Common myeloid progenitor, CD34-positive (primary cell): ENCODE measurements at regions of chr1 and their contacts with region 1.

Region 1: GRCh38 chr1:63316984-63317816 is 5.2 kb upstream of the FOXD3 start:
- DNase-seq: peak; percentile 75 to 80 (median 77)
- H3K4me3 ChIP-seq: peak overlapping the region; percentile 1 to 64 (median 54)
- H3K27ac ChIP-seq: no peak overlapping the region
- H3K4me1 ChIP-seq: peaks cover 3 to 25% (median 23%) of the 10 kb centered on the region in 4 experiments
- H3K27me3 ChIP-seq: peaks cover 18 to 83% (median 53%) of the 10 kb centered on the region in 5 experiments

Region 2: DNA sequence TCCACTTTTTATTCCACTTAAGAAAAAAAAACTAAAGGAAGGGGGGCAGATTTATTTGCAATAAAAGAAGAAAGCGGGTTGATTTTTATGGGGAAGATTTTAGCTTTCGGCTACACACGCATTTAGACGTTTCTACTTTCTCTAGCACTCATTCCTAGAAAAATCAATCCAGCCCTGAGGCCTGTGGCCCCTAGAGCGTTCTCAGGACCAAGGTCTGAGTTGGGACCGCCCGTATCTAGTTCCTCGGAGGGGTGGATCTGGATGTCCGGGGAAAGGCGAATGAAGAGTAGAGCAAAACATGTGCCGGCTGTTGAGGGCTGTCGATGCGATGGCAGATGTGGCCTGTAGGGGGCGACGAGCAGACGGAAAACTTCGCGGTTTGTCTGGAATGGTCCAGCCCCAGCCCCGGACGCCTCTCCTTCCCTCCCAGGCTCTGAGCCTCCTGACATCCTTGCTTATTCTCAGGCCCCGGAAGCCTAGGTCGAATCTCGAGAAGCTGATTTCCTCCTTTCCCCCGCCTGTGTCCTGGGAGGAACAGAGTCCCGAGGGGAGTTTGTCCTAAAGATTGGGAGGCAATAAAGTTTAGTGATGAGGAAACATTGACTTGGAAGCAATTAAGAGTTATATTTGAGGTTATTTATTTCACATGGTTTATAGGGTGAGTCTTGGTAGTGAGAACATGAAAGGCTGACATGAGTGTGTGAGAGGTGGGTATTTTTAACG is 10.4 kb after region 1 on chr1:
- CTCF ChIA-PET with region 1: interaction called, 38 read pairs
- POLR2A ChIA-PET with region 1: no interaction called
- DNase-seq: peak; percentile 66 to 75 (median 71)
- H3K4me3 ChIP-seq: no peak overlapping the region
- H3K27ac ChIP-seq: no peak overlapping the region
- H3K4me1 ChIP-seq: peaks cover 0 to 38% (median 36%) of the 10 kb centered on the region in 4 experiments
- H3K27me3 ChIP-seq: peaks cover 30 to 99% (median 56%) of the 10 kb centered on the region in 5 experiments

Region 3: DNA sequence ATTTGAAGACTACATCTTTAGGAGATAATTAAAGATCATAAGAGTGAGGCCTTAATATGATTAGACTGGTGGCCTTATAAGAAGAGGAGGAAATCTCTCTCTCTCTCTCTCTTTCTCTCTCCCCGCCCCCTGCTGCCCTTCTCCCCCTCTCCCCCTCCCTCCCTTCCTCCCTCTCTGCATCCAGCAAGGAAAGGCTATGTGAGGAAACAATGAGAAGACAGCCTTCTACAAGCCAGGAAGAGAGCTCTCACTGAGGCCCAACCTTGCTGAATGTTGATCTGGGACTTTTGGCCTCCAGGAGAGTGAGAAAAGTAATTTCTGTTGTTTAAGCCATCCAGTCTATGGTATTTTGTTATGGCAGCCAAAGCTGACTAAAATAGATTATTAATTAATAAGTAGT is 26.7 kb after region 1 on chr1:
- CTCF ChIA-PET with region 1: no interaction called
- POLR2A ChIA-PET with region 1: no interaction called
- DNase-seq: no peak
- H3K4me3 ChIP-seq: no peak overlapping the region
- H3K27ac ChIP-seq: no peak overlapping the region
- H3K4me1 ChIP-seq: no peaks in the 10 kb centered on the region
- H3K27me3 ChIP-seq: peaks cover 0 to 11% (median 3%) of the 10 kb centered on the region in 5 experiments